Activated B cell treated with CpG ODN at 0.5 μM for 24 hours (primary cell): ENCODE measurements at regions of chr3 and their contacts with region 1.

Region 1: GRCh38 chr3:156910022-156910421 is 83.9 kb downstream of the LEKR1 start:
- DNase-seq: no peak
- ATAC-seq: no peak
- H3K4me3 Mint-ChIP-seq: no peak overlapping the region
- H3K27ac Mint-ChIP-seq: no peak overlapping the region
- H3K4me1 Mint-ChIP-seq: peaks cover 6% of the 10 kb centered on the region
- H3K27me3 Mint-ChIP-seq: no peaks in the 10 kb centered on the region
- CTCF ChIP-seq: no peak

Region 2: DNA sequence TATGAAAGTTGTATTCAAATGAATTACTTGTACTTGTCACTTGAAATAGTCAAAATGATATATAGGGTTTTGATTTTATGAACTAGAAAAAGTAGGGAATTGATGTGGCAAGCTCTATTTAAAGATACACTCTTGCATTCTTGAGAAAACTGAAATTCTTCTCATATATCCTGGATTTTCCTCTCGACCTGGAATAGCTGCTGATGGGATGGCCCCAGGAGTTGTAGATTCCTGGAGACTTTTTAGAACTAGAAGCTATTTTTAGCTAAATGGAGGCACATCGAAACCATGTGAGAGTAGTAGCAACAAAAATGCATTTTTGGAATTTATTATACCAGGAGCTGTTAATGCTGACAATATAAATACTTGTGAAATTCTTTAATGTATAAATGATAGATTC is 42.0 kb after region 1 on chr3:
- CTCF ChIA-PET with region 1: no interaction called
- POLR2A ChIA-PET with region 1: no interaction called
- intact Hi-C with region 1: loop called (anchors 5 kb)
- DNase-seq: no peak
- ATAC-seq: no peak
- H3K4me3 Mint-ChIP-seq: no peak overlapping the region
- H3K27ac Mint-ChIP-seq: no peak overlapping the region
- H3K4me1 Mint-ChIP-seq: peaks cover 7% of the 10 kb centered on the region
- H3K27me3 Mint-ChIP-seq: no peaks in the 10 kb centered on the region
- CTCF ChIP-seq: no peak